ENCODE measurements at regions of chr1 and their contacts with region 1.

Region 1: DNA sequence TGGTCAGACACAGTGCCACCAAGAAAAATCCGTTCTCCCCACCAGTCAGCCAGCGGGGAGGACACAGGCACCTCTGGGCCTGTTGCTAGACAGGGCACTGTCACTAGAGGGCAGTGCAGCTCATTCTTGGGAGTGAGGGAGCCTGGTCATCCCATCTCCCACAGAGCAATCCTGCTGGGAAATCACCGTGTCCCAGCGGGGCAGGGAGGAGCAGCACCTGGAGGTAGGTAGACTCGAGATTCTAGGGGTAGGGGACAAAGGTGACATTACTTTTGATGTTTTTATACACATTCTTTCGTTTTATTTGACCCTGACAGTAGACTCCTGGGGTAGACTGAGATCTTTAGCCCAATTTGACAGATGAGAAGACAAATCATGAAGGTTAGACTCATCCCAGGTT is 6.7 kb upstream of the CAMK1G start:
- DNase-seq: peak; percentile 83
- H3K4me3 ChIP-seq: no peak overlapping the region
- H3K27ac ChIP-seq: no peak overlapping the region
- H3K4me1 ChIP-seq: no peaks in the 10 kb centered on the region
- H3K27me3 ChIP-seq: peaks cover 25% of the 10 kb centered on the region
- CTCF ChIP-seq: peak; percentile 85 to 95 (median 89)
- EP300 ChIP-seq: no peak
- POLR2A ChIP-seq: no peak

Region 2: GRCh38 chr1:209095627-209096595 is 480.9 kb before region 1 on chr1:
- in situ Hi-C with region 1: no loop called
- intact Hi-C with region 1: no loop called
- DNase-seq: no peak
- H3K4me3 ChIP-seq: no peak overlapping the region
- H3K27ac ChIP-seq: no peak overlapping the region
- H3K4me1 ChIP-seq: peaks cover 0 to 10% (median 2%) of the 10 kb centered on the region in 4 donors
- H3K27me3 ChIP-seq: no peaks in the 10 kb centered on the region
- CTCF ChIP-seq: no peak
- EP300 ChIP-seq: no peak
- POLR2A ChIP-seq: no peak

Region 3: DNA sequence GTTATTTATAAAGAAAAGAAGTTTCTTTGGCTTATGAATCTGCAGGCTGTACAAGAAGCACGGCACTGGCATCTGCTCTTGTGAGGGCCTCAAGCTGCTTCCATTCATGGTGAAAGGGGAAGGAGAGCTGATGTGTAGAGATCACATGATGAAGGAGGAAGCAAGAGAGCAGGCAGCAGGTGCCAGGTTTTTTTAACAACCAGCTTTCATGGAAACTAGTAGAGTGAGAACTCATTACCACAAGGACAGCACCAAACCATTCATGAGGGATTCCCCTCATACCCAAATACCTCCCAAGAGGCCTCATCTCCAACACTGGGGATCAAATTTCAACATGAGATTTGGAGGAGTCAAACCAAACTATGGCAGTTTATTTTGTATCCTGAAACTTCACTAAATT is 79.1 kb before region 1 on chr1:
- in situ Hi-C with region 1: no loop called
- intact Hi-C with region 1: no loop called
- DNase-seq: no peak
- H3K4me3 ChIP-seq: no peak overlapping the region
- H3K27ac ChIP-seq: no peak overlapping the region
- H3K4me1 ChIP-seq: no peaks in the 10 kb centered on the region
- H3K27me3 ChIP-seq: no peaks in the 10 kb centered on the region
- CTCF ChIP-seq: no peak
- EP300 ChIP-seq: no peak
- POLR2A ChIP-seq: no peak

Region 4: GRCh38 chr1:209542585-209542984 is 34.2 kb before region 1 on chr1:
- in situ Hi-C with region 1: no loop called
- intact Hi-C with region 1: no loop called
- DNase-seq: no peak
- H3K4me3 ChIP-seq: no peak overlapping the region
- H3K27ac ChIP-seq: no peak overlapping the region
- H3K4me1 ChIP-seq: no peaks in the 10 kb centered on the region
- H3K27me3 ChIP-seq: peaks cover 8% of the 10 kb centered on the region
- CTCF ChIP-seq: no peak
- EP300 ChIP-seq: no peak
- POLR2A ChIP-seq: no peak

Region 5: DNA sequence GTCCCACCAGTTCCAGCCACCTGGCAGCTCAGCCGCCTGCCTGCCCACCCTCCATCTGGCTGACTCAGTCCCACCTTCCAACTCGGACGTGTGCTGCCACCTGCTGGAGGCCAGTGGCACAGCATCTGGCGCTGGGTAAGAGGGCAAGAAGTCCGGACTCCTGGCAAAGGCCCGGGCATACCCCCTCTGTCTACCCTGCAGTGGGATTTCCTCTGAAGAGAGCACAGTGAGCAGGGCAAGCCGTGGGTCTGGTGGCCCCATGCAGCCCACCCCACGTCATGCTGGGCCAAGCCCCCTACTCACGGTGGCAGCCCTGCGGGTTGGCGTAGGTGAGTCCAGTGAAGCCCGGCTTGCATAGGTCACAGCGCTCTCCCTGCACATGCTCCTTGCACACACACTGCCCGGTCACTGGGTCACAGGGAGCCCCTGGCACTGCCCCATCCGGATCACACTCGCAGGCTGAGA is 51.0 kb after region 1 on chr1:
- in situ Hi-C with region 1: loop called in 1 of 4 experiments (anchors 10 kb)
- intact Hi-C with region 1: loop called (anchors 5 kb)
- DNase-seq: peak; percentile 73
- H3K4me3 ChIP-seq: no peak overlapping the region
- H3K27ac ChIP-seq: no peak overlapping the region
- H3K4me1 ChIP-seq: peaks cover 0 to 4% (median 0%) of the 10 kb centered on the region in 4 donors
- H3K27me3 ChIP-seq: no peaks in the 10 kb centered on the region
- CTCF ChIP-seq: peak; percentile 83 to 97 (median 93)
- EP300 ChIP-seq: no peak
- POLR2A ChIP-seq: no peak

Region 6: GRCh38 chr1:209692745-209693504 is 116.1 kb after region 1 on chr1:
- in situ Hi-C with region 1: loop called (anchors 5 to 10 kb)
- intact Hi-C with region 1: loop called (anchors 5 kb)
- DNase-seq: peak; percentile 79
- H3K4me3 ChIP-seq: no peak overlapping the region
- H3K27ac ChIP-seq: peak overlapping the region in 1 of 4 donors; percentile 23
- H3K4me1 ChIP-seq: peaks cover 0 to 24% (median 3%) of the 10 kb centered on the region in 4 donors
- H3K27me3 ChIP-seq: no peaks in the 10 kb centered on the region
- CTCF ChIP-seq: peak; percentile 79 to 88 (median 87)
- EP300 ChIP-seq: no peak
- POLR2A ChIP-seq: no peak

Region 7: GRCh38 chr1:209733409-209734192 is 156.8 kb after region 1 on chr1:
- in situ Hi-C with region 1: loop called in 1 of 4 experiments (anchors 10 kb)
- intact Hi-C with region 1: no loop called
- DNase-seq: no peak
- H3K4me3 ChIP-seq: no peak overlapping the region
- H3K27ac ChIP-seq: no peak overlapping the region
- H3K4me1 ChIP-seq: no peaks in the 10 kb centered on the region
- H3K27me3 ChIP-seq: no peaks in the 10 kb centered on the region
- CTCF ChIP-seq: no peak
- EP300 ChIP-seq: no peak
- POLR2A ChIP-seq: no peak

Region 8: DNA sequence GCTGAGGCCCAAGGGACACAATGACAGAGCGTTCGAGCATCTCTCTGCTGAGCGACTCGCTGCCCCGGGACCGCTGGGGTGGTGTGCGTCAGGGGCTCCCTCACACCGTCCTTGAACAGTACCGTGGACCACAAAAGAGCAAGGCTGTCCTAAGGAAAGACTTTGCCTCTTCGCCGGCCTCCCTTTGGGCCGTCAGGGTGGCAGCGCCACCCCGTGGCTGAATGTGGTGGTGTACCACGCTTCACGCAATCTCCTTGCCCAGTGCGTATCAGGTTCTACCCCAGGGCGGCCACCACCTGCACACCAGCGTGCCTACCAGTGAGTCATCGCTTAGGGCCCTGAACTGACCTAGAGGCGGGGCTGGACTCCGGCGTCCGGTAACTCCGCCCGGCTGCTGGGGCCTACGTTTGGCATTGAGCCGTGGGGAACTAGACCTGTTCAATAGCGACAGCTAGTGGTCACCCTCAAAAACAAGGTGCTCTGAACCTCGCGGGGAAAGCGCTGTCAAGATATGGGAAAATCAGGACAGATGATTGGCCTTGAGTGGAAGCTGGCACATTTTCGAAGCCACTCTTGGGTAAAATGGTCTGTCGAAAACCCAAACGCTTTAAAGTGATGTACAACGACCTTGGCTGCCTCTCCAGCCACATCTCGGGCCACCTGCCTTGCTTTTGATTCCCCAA is 170.9 kb after region 1 on chr1:
- in situ Hi-C with region 1: no loop called
- intact Hi-C with region 1: loop called (anchors 5 kb)
- DNase-seq: peak; percentile 97
- H3K4me3 ChIP-seq: peak overlapping the region in 2 of 4 donors; percentile 13 to 36
- H3K27ac ChIP-seq: peak overlapping the region; percentile 11 to 51 (median 18)
- H3K4me1 ChIP-seq: peaks cover 0 to 7% (median 2%) of the 10 kb centered on the region in 4 donors
- H3K27me3 ChIP-seq: no peaks in the 10 kb centered on the region
- CTCF ChIP-seq: peak; percentile 85 to 99 (median 92)
- EP300 ChIP-seq: no peak
- POLR2A ChIP-seq: no peak